ENCODE measurements at regions of chr11 and their contacts with region 1.

Region 1: GRCh38 chr11:10540923-10541560 is at the start of gene RNF141:
- DNase-seq: peak; percentile 95
- H3K4me3 Mint-ChIP-seq: peak within 1 kb of the TSS; percentile 86
- H3K27ac Mint-ChIP-seq: peak within 1 kb of the TSS; percentile 61
- H3K4me1 Mint-ChIP-seq: peaks cover 17% of the 10 kb centered on the region
- H3K27me3 Mint-ChIP-seq: peaks cover 3% of the 10 kb centered on the region
- total RNA-seq, gene RNF141: 12.2 to 12.3 TPM

Region 2: DNA sequence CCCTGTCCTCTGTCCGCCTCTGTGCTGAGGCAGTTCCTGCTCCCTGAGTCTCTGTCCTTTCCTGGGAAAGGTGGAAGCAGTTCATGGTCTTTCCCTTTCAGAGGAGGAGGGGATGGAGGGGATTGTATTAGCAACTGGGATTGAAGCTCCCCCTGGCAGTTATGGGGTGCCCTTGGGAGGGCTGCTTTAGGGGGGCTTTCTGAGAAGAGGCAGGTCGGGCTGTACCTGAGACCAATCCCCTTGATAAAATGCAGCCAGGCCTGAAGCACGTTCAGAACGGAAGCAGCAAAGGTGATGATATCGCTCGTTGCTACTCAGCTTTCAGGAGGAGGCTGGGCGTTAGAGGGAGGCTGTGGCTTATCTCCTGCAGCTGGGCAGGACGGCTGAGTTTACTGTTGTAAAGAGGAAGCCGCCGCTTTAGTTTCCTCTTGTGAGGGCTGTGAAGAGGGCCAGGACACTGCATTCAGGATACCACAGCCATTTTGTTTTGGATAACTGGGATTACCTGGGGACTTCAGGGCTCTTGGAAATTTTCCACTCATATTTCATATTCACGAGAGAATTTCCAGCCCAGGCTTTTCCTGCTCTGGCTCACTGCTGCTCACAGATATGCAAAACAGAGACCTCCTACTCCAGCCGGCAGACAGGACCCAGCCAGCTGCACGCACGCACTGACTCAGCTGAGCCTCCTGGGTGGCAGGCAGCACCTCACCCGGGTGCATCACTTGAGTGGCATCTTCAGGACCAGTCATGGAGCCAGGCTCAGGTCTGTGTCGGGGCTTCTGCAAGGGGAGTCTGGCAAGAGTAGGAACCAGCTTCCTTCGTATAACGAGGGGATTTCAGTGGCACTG is 85.2 kb before region 1 on chr11:
- CTCF ChIA-PET with region 1: interaction called, 66 read pairs
- POLR2A ChIA-PET with region 1: interaction called, 33 read pairs
- DNase-seq: peak; percentile 85
- H3K4me3 Mint-ChIP-seq: peak overlapping the region; percentile 84
- H3K27ac Mint-ChIP-seq: peak overlapping the region; percentile 90
- H3K4me1 Mint-ChIP-seq: peaks cover 78% of the 10 kb centered on the region
- H3K27me3 Mint-ChIP-seq: no peaks in the 10 kb centered on the region

Region 3: DNA sequence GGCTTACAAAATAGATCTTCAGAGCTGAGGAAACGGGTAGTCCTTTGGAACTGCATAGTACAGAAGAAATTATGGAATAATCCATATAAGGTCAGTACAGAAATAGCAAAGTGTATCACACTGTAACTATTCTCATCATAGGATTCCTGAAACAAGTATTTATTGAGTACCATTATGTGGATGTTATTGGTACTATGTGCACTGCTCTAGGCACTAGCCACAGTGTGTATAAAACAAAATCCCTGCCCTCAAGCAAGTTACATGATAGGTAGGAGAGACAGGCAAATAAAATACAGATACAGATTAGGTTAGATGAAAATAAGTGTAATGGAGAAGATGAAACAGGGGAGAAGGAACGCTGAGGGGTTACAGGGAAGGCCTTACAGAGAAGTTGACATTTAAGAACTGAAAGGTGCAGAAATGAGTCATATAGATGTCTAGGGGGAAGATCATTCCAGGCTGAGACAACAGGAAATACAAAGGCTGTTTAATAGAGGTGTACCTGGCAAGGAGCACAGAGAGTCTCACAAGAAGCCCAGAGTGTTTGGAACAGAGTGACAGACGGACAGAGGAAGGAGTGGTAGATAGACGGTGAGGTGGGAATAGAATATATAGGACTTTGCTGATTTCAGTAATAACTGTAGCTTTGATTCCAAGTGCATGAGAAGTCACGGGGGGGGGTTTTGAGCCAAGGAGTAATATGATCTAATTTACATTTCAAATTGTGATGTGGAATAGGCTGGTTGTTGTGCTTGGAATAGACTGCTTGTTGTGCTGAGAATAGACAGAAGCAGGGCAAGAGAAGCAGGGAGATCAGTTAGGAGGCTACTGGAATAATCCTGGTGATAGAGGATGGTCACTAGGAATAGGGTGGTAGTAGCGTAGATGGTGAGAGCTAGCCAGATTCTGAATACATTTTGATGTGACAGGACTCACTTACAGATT is 13.8 kb before region 1 on chr11:
- CTCF ChIA-PET with region 1: interaction called, 29 read pairs
- POLR2A ChIA-PET with region 1: interaction called, 10 read pairs
- DNase-seq: no peak
- H3K4me3 Mint-ChIP-seq: no peak overlapping the region
- H3K27ac Mint-ChIP-seq: no peak overlapping the region
- H3K4me1 Mint-ChIP-seq: peaks cover 15% of the 10 kb centered on the region
- H3K27me3 Mint-ChIP-seq: no peaks in the 10 kb centered on the region

Region 4: DNA sequence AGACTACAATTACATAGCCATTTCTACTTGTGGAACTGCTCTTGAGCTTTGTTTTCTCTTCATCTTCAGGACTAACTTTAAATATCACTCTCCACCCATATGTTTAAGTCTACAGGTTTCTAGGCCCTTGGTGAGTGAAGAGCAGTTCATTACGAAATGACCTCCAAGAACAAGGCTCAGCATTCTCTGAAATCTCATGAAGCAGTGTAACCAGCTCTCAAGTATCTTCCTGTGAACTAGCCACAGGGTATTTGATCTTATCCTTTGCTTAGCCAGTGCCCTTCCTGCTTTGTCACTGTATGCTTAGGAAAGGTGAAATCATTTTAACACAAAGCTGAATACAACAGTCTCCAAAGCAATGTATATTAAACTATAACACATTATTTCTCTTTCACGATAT is 47.9 kb after region 1 on chr11:
- CTCF ChIA-PET with region 1: interaction called, 25 read pairs
- POLR2A ChIA-PET with region 1: interaction called, 3 read pairs
- DNase-seq: no peak
- H3K4me3 Mint-ChIP-seq: no peak overlapping the region
- H3K27ac Mint-ChIP-seq: peak overlapping the region; percentile 40
- H3K4me1 Mint-ChIP-seq: peaks cover 60% of the 10 kb centered on the region
- H3K27me3 Mint-ChIP-seq: peaks cover 8% of the 10 kb centered on the region

Region 5: DNA sequence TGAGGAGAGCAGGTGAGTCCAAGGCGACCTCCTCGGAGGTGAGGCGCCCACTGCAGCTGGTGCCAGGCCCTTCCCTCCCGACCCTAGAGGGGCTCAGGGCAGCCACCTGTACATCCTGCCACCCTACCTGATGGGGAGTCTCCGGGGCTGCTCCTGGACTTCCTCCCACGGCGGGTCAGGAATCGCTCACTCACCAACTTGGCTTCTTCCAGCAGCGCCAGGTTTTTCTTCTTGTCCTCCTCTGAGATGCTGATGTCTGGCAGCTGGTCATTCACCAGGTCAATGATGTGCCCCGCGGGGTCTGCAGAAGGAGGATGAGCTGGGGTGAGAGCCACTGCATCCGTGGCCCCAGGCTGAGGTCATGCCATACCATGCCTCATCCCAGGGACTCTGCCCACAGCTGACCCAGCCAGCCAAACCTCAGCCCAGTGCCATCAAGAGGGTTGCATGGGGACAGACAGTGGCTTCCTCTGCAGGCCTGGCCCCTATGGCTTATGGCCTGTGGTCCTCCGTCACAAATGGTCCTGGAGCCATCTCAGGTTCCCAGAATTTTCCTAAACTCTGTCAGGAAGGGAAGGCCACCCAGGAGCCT is 88.5 kb after region 1 on chr11:
- CTCF ChIA-PET with region 1: no interaction called
- POLR2A ChIA-PET with region 1: no interaction called
- DNase-seq: no peak
- H3K4me3 Mint-ChIP-seq: no peak overlapping the region
- H3K27ac Mint-ChIP-seq: no peak overlapping the region
- H3K4me1 Mint-ChIP-seq: peaks cover 5% of the 10 kb centered on the region
- H3K27me3 Mint-ChIP-seq: peaks cover 6% of the 10 kb centered on the region

Region 6: GRCh38 chr11:10646005-10646404 is 105.0 kb after region 1 on chr11:
- CTCF ChIA-PET with region 1: interaction called, 18 read pairs
- POLR2A ChIA-PET with region 1: interaction called, 13 read pairs
- DNase-seq: no peak
- H3K4me3 Mint-ChIP-seq: no peak overlapping the region
- H3K27ac Mint-ChIP-seq: no peak overlapping the region
- H3K4me1 Mint-ChIP-seq: peaks cover 10% of the 10 kb centered on the region
- H3K27me3 Mint-ChIP-seq: no peaks in the 10 kb centered on the region

Measured in activated CD4-positive, alpha-beta memory T cell treated with anti-CD3 and anti-CD28 coated beads, Interleukin-2, amount 10 ng/mL, durations not matched to agents 7 days and 5 days (primary cell).